ENCODE measurements at regions of chr9 and their contacts with region 1.

Region 1: GRCh38 chr9:131678499-131679111 is 61.3 kb downstream of the RAPGEF1 start:
- DNase-seq: peak; percentile 58
- H3K4me3 ChIP-seq: no peak overlapping the region
- H3K27ac ChIP-seq: peak overlapping the region; percentile 73 to 75
- H3K4me1 ChIP-seq: peaks cover 3% of the 10 kb centered on the region
- H3K27me3 ChIP-seq: no peaks in the 10 kb centered on the region
- CTCF ChIP-seq: no peak
- POLR2A ChIP-seq: peak; percentile 20

Region 2: GRCh38 chr9:131598121-131598520 is 80.5 kb before region 1 on chr9:
- intact Hi-C with region 1: no loop called
- DNase-seq: no peak
- H3K4me3 ChIP-seq: no peak overlapping the region
- H3K27ac ChIP-seq: no peak overlapping the region
- H3K4me1 ChIP-seq: no peaks in the 10 kb centered on the region
- H3K27me3 ChIP-seq: no peaks in the 10 kb centered on the region
- CTCF ChIP-seq: no peak
- POLR2A ChIP-seq: no peak

Region 3: GRCh38 chr9:131709771-131710454 is 31.3 kb after region 1 on chr9:
- intact Hi-C with region 1: loop called (anchors 5 kb)
- DNase-seq: no peak
- H3K4me3 ChIP-seq: no peak overlapping the region
- H3K27ac ChIP-seq: peak overlapping the region in 1 of 2 donors; percentile 36
- H3K4me1 ChIP-seq: no peaks in the 10 kb centered on the region
- H3K27me3 ChIP-seq: no peaks in the 10 kb centered on the region
- CTCF ChIP-seq: no peak
- POLR2A ChIP-seq: no peak

Region 4: GRCh38 chr9:131733541-131734061 is 55.0 kb after region 1 on chr9:
- intact Hi-C with region 1: loop called (anchors 5 kb)
- DNase-seq: no peak
- H3K4me3 ChIP-seq: no peak overlapping the region
- H3K27ac ChIP-seq: peak overlapping the region in 1 of 2 donors; percentile 39
- H3K4me1 ChIP-seq: peaks cover 9% of the 10 kb centered on the region
- H3K27me3 ChIP-seq: no peaks in the 10 kb centered on the region
- CTCF ChIP-seq: no peak
- POLR2A ChIP-seq: no peak

Measured in prostate gland (tissue), 2 donors.